ENCODE measurements at regions of chr10 and their contacts with region 1.

Region 1: GRCh38 chr10:67779465-67780203 is 58.4 kb downstream of the DNAJC12 start:
- DNase-seq: peak; percentile 63
- H3K4me3 ChIP-seq: no peak overlapping the region
- H3K27ac ChIP-seq: no peak overlapping the region
- H3K4me1 ChIP-seq: peaks cover 0 to 22% (median 7%) of the 10 kb centered on the region in 4 donors
- H3K27me3 ChIP-seq: no peaks in the 10 kb centered on the region
- CTCF ChIP-seq: peak; percentile 81 to 84 (median 83)
- EP300 ChIP-seq: no peak
- POLR2A ChIP-seq: no peak

Region 2: DNA sequence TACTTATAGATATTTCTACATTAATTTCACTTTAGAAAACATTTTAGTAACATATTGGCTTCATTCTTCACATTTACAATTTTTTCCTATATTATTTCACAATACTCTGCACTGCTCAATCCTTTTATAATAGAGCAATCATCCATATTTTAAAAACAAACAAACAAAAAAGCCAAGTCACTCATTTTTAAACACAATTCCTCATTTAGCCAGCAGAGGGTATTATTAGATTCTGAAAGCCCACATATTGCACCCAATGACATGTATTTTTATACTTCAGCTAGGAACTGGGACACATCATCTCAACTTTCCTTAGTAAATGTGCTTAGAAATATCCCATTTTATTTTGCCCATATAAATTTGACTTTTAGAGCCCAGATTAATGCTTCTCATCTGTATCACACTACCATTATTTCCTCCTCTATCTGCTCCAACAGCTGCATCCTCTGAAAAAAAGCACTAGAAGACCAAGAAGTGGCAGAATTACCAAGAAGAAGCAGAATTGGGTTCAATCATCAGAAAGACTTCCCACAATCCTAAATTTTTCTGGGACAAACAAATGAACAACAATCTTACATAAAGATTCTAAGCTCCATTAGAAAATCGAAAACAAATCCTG is 113.1 kb before region 1 on chr10:
- in situ Hi-C with region 1: no loop called
- intact Hi-C with region 1: loop called (anchors 10 kb)
- DNase-seq: no peak
- H3K4me3 ChIP-seq: no peak overlapping the region
- H3K27ac ChIP-seq: no peak overlapping the region
- H3K4me1 ChIP-seq: peaks cover 0 to 2% (median 0%) of the 10 kb centered on the region in 4 donors
- H3K27me3 ChIP-seq: no peaks in the 10 kb centered on the region
- CTCF ChIP-seq: peak; percentile 24 to 41 (median 39)
- EP300 ChIP-seq: no peak
- POLR2A ChIP-seq: no peak

Region 3: GRCh38 chr10:67697724-67698131 is 81.9 kb before region 1 on chr10:
- in situ Hi-C with region 1: loop called in 3 of 4 experiments (anchors 5 kb)
- intact Hi-C with region 1: no loop called
- DNase-seq: no peak
- H3K4me3 ChIP-seq: no peak overlapping the region
- H3K27ac ChIP-seq: no peak overlapping the region
- H3K4me1 ChIP-seq: peaks cover 0 to 16% (median 2%) of the 10 kb centered on the region in 4 donors
- H3K27me3 ChIP-seq: peaks cover 9% of the 10 kb centered on the region
- CTCF ChIP-seq: peak; percentile 55 to 77 (median 67)
- EP300 ChIP-seq: no peak
- POLR2A ChIP-seq: no peak

Region 4: DNA sequence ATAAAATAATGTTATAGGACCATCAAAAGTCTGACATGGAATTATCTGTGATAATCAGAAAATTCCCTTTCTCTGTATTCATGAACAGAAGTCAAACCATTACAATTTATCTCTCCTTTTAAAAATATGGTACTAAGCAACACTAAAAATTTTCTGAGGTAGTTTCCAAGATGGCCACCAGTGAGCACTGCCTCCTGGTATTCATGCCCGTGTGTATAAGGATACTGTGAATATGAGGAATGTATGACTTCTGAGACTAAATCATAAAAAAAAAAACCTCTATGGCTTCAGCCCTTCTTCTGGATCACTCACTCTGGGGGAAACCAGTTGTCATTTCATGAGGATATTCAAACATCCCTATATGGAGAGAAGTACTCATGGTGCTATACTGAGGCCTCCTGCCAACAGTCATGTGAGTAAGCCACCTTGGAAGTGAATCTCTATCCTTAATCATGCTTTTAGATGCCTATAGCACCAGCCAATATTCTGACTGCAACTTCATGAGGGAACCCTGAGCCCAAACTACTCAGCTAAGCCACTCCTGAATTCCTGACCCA is 145.9 kb after region 1 on chr10:
- in situ Hi-C with region 1: no loop called
- intact Hi-C with region 1: no loop called
- DNase-seq: no peak
- H3K4me3 ChIP-seq: no peak overlapping the region
- H3K27ac ChIP-seq: no peak overlapping the region
- H3K4me1 ChIP-seq: no peaks in the 10 kb centered on the region
- H3K27me3 ChIP-seq: no peaks in the 10 kb centered on the region
- CTCF ChIP-seq: no peak
- EP300 ChIP-seq: no peak
- POLR2A ChIP-seq: no peak

Measured in transverse colon (tissue), 4 donors.